Naive thymus-derived CD4-positive, alpha-beta T cell (primary cell): ENCODE measurements at regions of chr1 and their contacts with region 1.

Region 1: DNA sequence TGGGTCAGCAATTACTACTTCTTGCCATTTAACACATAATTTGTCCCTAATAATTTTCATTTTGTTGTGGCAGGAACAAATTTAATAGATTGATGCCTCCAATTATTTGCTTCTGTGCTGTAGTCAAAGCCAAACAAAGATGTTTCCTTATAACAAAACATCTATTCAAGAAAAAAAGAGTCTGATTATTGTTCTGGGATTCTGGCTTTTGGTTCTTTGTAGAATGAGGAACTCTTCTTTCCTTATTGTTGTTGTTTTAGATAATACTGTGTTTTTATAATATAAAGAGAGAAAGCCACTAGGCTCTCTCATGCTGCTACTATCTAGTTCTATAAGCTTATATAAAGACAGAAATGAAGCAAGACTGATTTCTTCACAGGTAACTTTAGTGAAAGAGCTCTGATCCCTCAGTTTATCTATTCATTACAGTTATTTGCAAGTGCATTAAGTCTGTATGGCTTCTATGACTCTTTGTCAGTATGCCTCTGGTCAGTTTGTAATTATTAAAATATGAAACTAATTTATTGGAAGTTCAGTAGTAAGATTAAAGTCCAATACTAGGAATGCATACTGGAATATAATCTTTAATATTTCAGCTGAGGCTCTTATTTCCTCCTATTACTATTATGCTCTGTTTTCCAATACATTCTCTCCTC is 37.4 kb downstream of the PRKACB start:
- DNase-seq: no peak
- ATAC-seq: no peak
- H3K4me3 ChIP-seq: no peak overlapping the region
- H3K4me3 Mint-ChIP-seq: no peak overlapping the region
- H3K27ac ChIP-seq: no peak overlapping the region
- H3K27ac Mint-ChIP-seq: peak overlapping the region in 4 of 9 donors; percentile 33 to 57 (median 38)
- H3K4me1 ChIP-seq: peaks cover 0 to 7% of the 10 kb centered on the region in 2 donors
- H3K4me1 Mint-ChIP-seq: peaks cover 2 to 44% (median 19%) of the 10 kb centered on the region in 7 donors
- H3K27me3 ChIP-seq: no peaks in the 10 kb centered on the region
- H3K27me3 Mint-ChIP-seq: no peaks in the 10 kb centered on the region

Region 2: DNA sequence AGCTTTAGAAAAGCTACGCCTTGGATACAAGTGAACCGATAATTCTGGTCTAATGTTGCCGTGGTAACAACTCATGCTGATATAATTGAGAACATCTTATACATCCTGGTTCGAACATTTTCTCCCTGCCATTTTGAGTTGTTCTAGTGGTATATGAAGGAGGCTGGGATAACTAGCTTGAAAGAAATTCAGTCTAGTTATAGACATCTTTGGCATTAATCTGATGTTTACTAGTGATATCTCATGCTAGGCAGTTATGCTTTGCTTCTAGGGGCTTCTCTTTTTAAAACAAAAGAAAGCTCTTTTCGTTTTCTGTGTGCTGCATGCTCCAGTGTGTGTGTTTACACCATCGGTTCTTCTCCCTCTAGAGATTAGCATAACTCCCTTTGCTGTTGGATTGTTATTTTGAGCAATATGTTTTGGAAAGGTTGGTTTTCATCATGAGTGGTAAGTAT is 16.9 kb before region 1 on chr1:
- CTCF ChIA-PET with region 1: interaction called, 3 read pairs
- POLR2A ChIA-PET with region 1: no interaction called
- intact Hi-C with region 1: loop called in 1 of 2 experiments (anchors 1 kb)
- DNase-seq: no peak
- ATAC-seq: no peak
- H3K4me3 ChIP-seq: peak overlapping the region; percentile 10
- H3K4me3 Mint-ChIP-seq: peak overlapping the region in 9 of 10 donors; percentile 44 to 74 (median 67)
- H3K27ac ChIP-seq: no peak overlapping the region
- H3K27ac Mint-ChIP-seq: peak overlapping the region in 5 of 9 donors; percentile 12 to 69 (median 39)
- H3K4me1 ChIP-seq: peaks cover 28 to 61% of the 10 kb centered on the region in 2 donors
- H3K4me1 Mint-ChIP-seq: peaks cover 48 to 97% (median 88%) of the 10 kb centered on the region in 7 donors
- H3K27me3 ChIP-seq: no peaks in the 10 kb centered on the region
- H3K27me3 Mint-ChIP-seq: no peaks in the 10 kb centered on the region